ENCODE measurements at regions of chr2 and their contacts with region 1.

Region 1: GRCh38 chr2:121722479-121722878 is 14.2 kb downstream of the NIFK start:
- DNase-seq: no peak
- H3K4me3 ChIP-seq: no peak overlapping the region
- H3K27ac ChIP-seq: no peak overlapping the region
- H3K4me1 ChIP-seq: no peaks in the 10 kb centered on the region
- H3K27me3 ChIP-seq: no peaks in the 10 kb centered on the region
- CTCF ChIP-seq: no peak
- POLR2A ChIP-seq: no peak

Region 2: DNA sequence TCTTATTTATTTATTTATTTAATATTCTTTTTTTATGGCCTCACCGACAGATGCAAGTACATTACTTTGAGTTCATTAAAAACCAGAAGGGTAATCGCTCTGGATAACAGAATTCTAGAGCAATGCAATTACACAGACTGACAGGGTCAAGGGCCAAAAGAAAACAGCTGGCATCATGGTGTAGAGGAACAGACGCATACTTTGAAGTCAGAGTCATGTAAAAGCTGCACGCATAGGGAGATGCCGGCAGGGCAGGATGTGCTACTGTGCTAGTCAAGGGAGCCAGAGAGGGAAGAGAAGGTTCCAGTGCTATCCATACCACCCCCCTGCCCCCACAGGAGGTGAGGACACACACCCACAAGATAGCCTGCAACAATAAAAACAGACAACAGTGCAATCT is 322.3 kb before region 1 on chr2:
- intact Hi-C with region 1: loop called (anchors 5 kb)
- DNase-seq: no peak
- H3K4me3 ChIP-seq: no peak overlapping the region
- H3K27ac ChIP-seq: no peak overlapping the region
- H3K4me1 ChIP-seq: no peaks in the 10 kb centered on the region
- H3K27me3 ChIP-seq: no peaks in the 10 kb centered on the region
- CTCF ChIP-seq: no peak
- POLR2A ChIP-seq: no peak

Measured in thyroid gland (tissue), 4 donors.